WTC11 (cell line): ENCODE measurements at regions of chr7 and their contacts with region 1.

Region 1: GRCh38 chr7:31443457-31443856 is 70.4 kb upstream of the ITPRID1 start:
- DNase-seq: no peak
- ATAC-seq: peak; percentile 89
- H3K4me3 Mint-ChIP-seq: no peak overlapping the region
- H3K27ac Mint-ChIP-seq: no peak overlapping the region
- H3K4me1 Mint-ChIP-seq: peaks cover 38% of the 10 kb centered on the region
- H3K27me3 Mint-ChIP-seq: peaks cover 22% of the 10 kb centered on the region
- CTCF ChIP-seq: peak; percentile 78

Region 2: DNA sequence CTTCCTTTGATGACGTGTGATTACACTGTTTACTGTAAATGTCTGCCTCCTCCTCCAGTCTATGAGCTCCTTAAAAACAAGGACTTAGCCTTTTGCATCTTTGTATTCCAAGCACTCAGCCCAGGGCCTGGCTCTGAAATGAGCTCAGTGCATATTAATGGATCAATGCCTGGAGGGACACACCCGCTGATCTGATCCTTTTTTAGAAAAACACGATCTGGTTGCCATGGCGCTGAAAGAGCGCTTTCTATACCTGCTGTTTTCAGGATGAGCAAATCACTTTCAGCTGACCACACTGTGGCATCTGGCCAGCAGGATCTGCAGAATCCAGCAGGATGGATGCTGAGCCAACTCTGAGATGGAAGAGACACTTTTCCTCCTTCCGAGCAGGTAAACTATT is 886.6 kb before region 1 on chr7:
- CTCF ChIA-PET with region 1: no interaction called
- POLR2A ChIA-PET with region 1: no interaction called
- DNase-seq: peak; percentile 47
- ATAC-seq: peak; percentile 84
- H3K4me3 Mint-ChIP-seq: no peak overlapping the region
- H3K27ac Mint-ChIP-seq: no peak overlapping the region
- H3K4me1 Mint-ChIP-seq: no peaks in the 10 kb centered on the region
- H3K27me3 Mint-ChIP-seq: no peaks in the 10 kb centered on the region; the same call in 1 of the 2 replicates
- CTCF ChIP-seq: no peak

Region 3: GRCh38 chr7:31192986-31193385 is 250.5 kb before region 1 on chr7:
- CTCF ChIA-PET with region 1: interaction called, 13 read pairs
- POLR2A ChIA-PET with region 1: no interaction called
- DNase-seq: peak; percentile 87
- ATAC-seq: peak; percentile 100
- H3K4me3 Mint-ChIP-seq: no peak overlapping the region
- H3K27ac Mint-ChIP-seq: no peak overlapping the region
- H3K4me1 Mint-ChIP-seq: no peaks in the 10 kb centered on the region
- H3K27me3 Mint-ChIP-seq: peaks cover 21% of the 10 kb centered on the region
- CTCF ChIP-seq: peak; percentile 59

Region 4: DNA sequence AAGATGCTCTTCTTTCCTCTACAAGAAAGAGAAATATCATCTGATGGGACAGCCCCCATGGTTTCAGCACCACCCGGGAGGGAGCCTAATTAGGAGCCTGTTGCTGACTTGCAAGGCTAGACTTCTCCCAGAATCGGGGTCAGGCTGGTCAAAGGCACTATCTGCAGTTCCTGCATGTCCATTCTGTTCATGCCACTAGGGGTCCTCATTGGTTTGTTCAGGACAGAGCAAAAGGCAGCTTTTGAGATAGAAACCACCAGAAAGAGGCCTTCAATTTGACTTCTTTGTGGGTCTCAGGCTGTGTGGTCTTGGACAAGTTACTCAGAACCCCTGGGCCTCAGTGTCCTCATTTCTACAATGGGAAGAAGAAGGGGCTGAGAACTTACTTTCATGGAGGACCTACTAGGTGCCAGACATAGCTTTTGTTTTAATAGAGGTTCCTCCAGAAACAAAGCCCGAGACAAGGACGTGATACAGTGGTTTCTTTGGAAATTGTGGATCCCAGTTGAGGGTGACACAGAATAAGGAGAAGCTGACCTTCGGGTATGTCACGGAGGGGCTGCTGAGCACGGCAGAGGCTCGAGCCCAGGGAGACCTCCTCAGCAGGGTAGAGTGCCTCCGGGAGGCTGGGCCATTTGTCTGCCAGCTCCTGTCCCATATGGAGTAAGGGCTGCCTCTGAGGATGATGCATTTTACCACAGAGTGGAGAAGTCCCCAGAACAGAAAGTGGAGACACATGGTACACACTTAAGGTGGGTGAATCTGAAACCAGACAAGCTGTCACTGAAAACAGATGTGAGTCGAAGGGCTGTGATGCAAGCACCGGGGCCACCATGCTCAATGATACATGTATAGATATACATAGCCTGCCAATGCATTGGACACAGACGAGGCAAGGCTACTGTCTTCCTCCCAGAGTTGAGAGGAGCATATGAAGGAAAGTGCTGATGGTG is 69.8 kb before region 1 on chr7:
- CTCF ChIA-PET with region 1: interaction called, 34 read pairs
- POLR2A ChIA-PET with region 1: no interaction called
- DNase-seq: peak; percentile 74
- ATAC-seq: peak; percentile 85
- H3K4me3 Mint-ChIP-seq: no peak overlapping the region
- H3K27ac Mint-ChIP-seq: no peak overlapping the region
- H3K4me1 Mint-ChIP-seq: peaks cover 44% of the 10 kb centered on the region
- H3K27me3 Mint-ChIP-seq: peaks cover 66% of the 10 kb centered on the region
- CTCF ChIP-seq: peak; percentile 67

Region 5: GRCh38 chr7:31456646-31457368 is 13.3 kb after region 1 on chr7:
- CTCF ChIA-PET with region 1: interaction called, 16 read pairs
- POLR2A ChIA-PET with region 1: no interaction called
- DNase-seq: no peak
- ATAC-seq: no peak
- H3K4me3 Mint-ChIP-seq: no peak overlapping the region
- H3K27ac Mint-ChIP-seq: no peak overlapping the region
- H3K4me1 Mint-ChIP-seq: peaks cover 18% of the 10 kb centered on the region
- H3K27me3 Mint-ChIP-seq: peaks cover 97% of the 10 kb centered on the region
- CTCF ChIP-seq: no peak

Region 6: GRCh38 chr7:31478721-31479120 is 35.3 kb after region 1 on chr7:
- CTCF ChIA-PET with region 1: interaction called, 19 read pairs
- POLR2A ChIA-PET with region 1: no interaction called
- DNase-seq: no peak
- ATAC-seq: no peak
- H3K4me3 Mint-ChIP-seq: no peak overlapping the region
- H3K27ac Mint-ChIP-seq: peak overlapping the region; percentile 67; the same call in 1 of the 2 replicates
- H3K4me1 Mint-ChIP-seq: peaks cover 36% of the 10 kb centered on the region
- H3K27me3 Mint-ChIP-seq: peaks cover 26% of the 10 kb centered on the region
- CTCF ChIP-seq: no peak

Region 7: DNA sequence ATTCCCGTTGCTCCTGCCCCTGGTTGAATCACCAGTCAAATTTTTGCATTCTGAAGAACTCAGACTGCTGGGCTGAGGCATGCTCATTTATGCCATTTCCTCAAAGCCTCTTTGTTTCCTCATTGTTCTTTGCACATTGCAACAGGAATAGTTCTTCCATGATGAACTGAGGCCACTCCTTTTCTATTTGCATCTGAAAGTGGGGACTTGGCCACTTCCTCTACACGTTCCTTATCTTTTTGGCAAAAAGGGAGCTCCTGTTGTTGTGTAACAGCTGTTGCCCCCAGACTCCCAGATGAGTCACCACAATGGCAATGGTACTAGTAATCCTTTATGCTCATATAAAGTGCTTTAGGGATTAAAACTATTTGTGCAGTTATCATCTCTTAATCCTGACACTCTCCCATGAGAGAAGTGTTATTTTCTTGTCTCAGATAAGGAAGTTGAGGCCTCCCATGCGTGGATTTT is 50.3 kb after region 1 on chr7:
- CTCF ChIA-PET with region 1: interaction called, 51 read pairs
- POLR2A ChIA-PET with region 1: interaction called, 3 read pairs
- DNase-seq: no peak
- ATAC-seq: peak; percentile 82
- H3K4me3 Mint-ChIP-seq: no peak overlapping the region
- H3K27ac Mint-ChIP-seq: peak overlapping the region; percentile 94
- H3K4me1 Mint-ChIP-seq: peaks cover 44% of the 10 kb centered on the region
- H3K27me3 Mint-ChIP-seq: peaks cover 2% of the 10 kb centered on the region; the same call in 1 of the 2 replicates
- CTCF ChIP-seq: no peak

Region 8: GRCh38 chr7:31540721-31541120 is 97.3 kb after region 1 on chr7:
- CTCF ChIA-PET with region 1: no interaction called
- POLR2A ChIA-PET with region 1: no interaction called
- DNase-seq: no peak
- ATAC-seq: no peak
- H3K4me3 Mint-ChIP-seq: no peak overlapping the region
- H3K27ac Mint-ChIP-seq: no peak overlapping the region
- H3K4me1 Mint-ChIP-seq: peaks cover 12% of the 10 kb centered on the region
- H3K27me3 Mint-ChIP-seq: no peaks in the 10 kb centered on the region; the same call in 1 of the 2 replicates
- CTCF ChIP-seq: no peak